ENCODE measurements at regions of chr12 and their contacts with region 1.

Region 1: DNA sequence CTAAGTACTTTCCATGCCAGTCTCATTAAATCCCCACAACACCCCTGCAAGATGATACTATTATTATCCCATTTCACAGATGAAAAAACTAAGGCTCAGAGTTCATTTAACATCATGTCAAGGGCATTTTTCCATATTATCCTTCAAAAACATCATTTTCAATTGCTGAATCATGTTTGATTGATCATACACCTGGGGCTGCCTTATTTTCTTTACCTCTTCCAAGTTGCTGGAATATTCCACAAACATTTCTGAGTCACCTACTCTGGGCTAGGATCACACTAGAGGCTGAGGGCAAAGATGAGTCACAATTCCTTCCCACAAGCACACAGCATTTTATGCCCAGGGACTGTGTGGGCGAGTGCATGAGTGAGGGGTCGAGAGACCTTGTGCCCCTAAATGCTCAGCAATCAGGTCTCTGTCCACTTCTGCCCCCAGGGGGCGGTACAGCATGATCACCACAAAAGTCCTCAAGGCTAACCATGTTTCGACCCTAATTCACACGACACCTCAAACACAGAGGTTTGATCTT is 14.1 kb upstream of the TMEM119 start:
- DNase-seq: peak in 5 of 9 donors; percentile 28 to 48 (median 43)
- ATAC-seq: peak; percentile 51
- H3K4me3 ChIP-seq: no peak overlapping the region
- H3K4me3 Mint-ChIP-seq: no peak overlapping the region
- H3K27ac ChIP-seq: no peak overlapping the region
- H3K27ac Mint-ChIP-seq: peak overlapping the region in 3 of 9 donors; percentile 16 to 56 (median 30)
- H3K4me1 ChIP-seq: peaks cover 6 to 10% of the 10 kb centered on the region in 2 donors
- H3K4me1 Mint-ChIP-seq: peaks cover 8 to 25% (median 14%) of the 10 kb centered on the region in 7 donors
- H3K27me3 ChIP-seq: no peaks in the 10 kb centered on the region
- H3K27me3 Mint-ChIP-seq: no peaks in the 10 kb centered on the region

Region 2: GRCh38 chr12:108646600-108647579 is 34.9 kb after region 1 on chr12:
- CTCF ChIA-PET with region 1: interaction called, 29 read pairs
- POLR2A ChIA-PET with region 1: interaction called, 3 read pairs
- intact Hi-C with region 1: loop called in 1 of 2 experiments (anchors 1 kb)
- DNase-seq: peak in 1 of 9 donors; percentile 26
- ATAC-seq: no peak
- H3K4me3 ChIP-seq: no peak overlapping the region
- H3K4me3 Mint-ChIP-seq: peak overlapping the region; percentile 53 to 89 (median 78)
- H3K27ac ChIP-seq: peak overlapping the region; percentile 50
- H3K27ac Mint-ChIP-seq: peak overlapping the region; percentile 75 to 97 (median 90)
- H3K4me1 ChIP-seq: peaks cover 0 to 27% of the 10 kb centered on the region in 2 donors
- H3K4me1 Mint-ChIP-seq: peaks cover 21 to 37% (median 34%) of the 10 kb centered on the region in 7 donors
- H3K27me3 ChIP-seq: no peaks in the 10 kb centered on the region
- H3K27me3 Mint-ChIP-seq: no peaks in the 10 kb centered on the region